ENCODE measurements at regions of chr19 and their contacts with region 1.

Region 1: DNA sequence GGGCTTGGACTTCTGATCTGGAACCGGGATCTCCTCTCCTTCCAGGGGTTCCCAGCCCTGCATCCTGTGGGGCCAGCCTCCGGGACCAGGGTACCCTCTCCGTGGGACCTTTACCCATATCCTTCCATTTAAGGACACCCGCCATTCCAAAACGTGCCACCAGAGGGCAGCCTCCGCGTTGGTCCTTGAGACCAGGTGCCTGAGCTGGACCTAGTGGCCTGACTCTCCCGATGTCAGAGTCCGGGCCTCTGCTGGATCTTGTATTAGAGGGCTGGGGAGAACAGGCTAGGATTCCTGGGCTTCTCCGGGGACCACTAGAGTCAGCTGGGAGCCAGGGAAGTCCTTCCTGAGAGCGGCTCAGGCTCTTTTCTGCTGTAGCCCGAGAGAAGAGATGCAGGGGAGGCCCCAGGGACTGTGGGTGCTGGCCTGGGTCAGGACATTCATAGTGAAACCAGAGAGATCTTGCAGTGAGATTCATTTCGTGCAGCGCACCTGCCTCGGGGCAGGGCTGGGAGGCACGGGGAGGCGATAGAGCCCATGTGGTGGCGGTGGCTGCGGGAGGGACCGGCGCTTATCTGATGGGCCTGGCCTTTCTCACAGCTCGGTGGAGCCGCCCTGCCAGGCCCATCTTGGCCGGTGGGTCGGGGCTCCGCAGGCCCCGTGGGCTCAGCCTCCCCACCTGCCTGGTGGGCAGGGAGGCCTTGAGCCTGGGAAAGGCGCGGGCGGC is 9.8 kb upstream of the SLC7A10 start:
- DNase-seq: no peak
- H3K4me3 ChIP-seq: no peak overlapping the region
- CTCF ChIP-seq: peak; percentile 93

Region 2: DNA sequence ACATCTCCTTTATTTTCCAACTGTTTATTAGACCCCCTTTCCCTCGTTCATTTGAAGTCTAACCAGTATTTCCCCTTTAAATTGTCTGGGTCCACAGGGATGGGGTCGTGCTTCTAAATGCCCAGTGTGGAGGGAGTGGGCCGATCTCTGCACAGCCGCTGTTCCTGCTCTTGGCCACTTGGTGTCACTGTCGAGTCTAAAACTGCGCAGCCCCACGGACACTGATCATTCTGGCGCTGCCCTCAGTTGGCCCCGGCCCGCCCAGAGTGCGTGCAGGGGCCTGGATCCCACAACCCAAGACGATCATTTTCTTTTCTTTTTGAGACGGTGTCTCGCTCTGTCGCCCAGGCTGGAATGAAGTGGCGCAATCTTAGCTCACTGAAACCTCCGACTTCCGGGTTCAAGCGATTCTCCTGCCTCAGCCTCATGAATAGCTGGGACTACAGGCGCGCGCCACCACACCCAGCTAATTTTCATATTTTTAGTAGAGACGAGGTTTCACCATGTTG is 91.5 kb before region 1 on chr19:
- CTCF ChIA-PET with region 1: interaction called, 11 read pairs
- POLR2A ChIA-PET with region 1: no interaction called
- DNase-seq: no peak
- H3K4me3 ChIP-seq: no peak overlapping the region
- CTCF ChIP-seq: peak; percentile 97

Region 3: DNA sequence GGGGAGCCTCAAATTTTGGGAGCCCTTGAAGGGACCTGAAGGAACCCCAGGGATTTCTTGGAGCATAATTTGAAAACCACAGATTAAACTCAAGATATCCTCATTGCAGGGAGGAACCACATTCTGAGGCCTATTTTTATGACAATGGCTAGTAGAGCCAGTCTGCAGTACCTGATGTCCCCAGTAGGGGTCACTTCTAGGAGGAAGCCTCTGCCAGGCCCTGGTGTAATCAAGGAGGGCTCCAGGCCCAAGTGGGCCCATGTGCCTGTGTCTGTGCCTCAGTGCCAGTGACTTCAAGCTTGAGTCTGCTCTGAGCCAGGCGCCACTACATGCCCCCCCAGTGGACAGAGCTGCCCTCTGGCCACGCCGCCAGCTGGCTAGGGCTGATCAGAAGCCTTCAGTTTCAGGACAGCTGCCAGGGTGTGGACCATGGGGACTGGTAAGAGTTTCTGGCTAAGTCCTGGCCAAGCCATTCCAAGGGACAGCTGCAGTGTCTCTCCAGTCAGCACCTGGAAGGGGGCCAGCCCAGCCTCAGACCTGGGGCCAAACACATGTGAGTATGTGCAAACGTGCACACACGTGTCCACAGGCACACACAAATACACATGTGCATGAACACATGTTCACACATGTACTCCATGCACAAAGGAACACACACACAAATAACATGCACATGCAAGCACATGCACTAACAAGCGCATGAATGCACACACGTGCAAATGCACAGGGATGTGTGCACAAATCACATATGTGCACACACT is 10.7 kb after region 1 on chr19:
- CTCF ChIA-PET with region 1: interaction called, 14 read pairs
- POLR2A ChIA-PET with region 1: no interaction called
- DNase-seq: no peak
- H3K4me3 ChIP-seq: no peak overlapping the region
- CTCF ChIP-seq: peak; percentile 19

Region 4: GRCh38 chr19:33252971-33253370 is 17.5 kb after region 1 on chr19:
- CTCF ChIA-PET with region 1: interaction called, 14 read pairs
- POLR2A ChIA-PET with region 1: no interaction called
- DNase-seq: no peak
- H3K4me3 ChIP-seq: no peak overlapping the region
- CTCF ChIP-seq: no peak

Region 5: GRCh38 chr19:33406521-33407139 is 171.2 kb after region 1 on chr19:
- CTCF ChIA-PET with region 1: interaction called, 406 read pairs
- POLR2A ChIA-PET with region 1: no interaction called
- DNase-seq: no peak
- H3K4me3 ChIP-seq: no peak overlapping the region
- CTCF ChIP-seq: peak; percentile 96

Region 6: GRCh38 chr19:33416307-33417215 is 181.1 kb after region 1 on chr19:
- CTCF ChIA-PET with region 1: interaction called, 406 read pairs
- POLR2A ChIA-PET with region 1: no interaction called
- DNase-seq: no peak
- H3K4me3 ChIP-seq: peak overlapping the region; percentile 12; the same call in 1 of the 2 replicates
- CTCF ChIP-seq: peak; percentile 74

Region 7: GRCh38 chr19:33771384-33772101 is 536.1 kb after region 1 on chr19:
- CTCF ChIA-PET with region 1: interaction called, 16 read pairs
- POLR2A ChIA-PET with region 1: no interaction called
- DNase-seq: no peak
- H3K4me3 ChIP-seq: no peak overlapping the region
- CTCF ChIP-seq: peak; percentile 91